Stomach (tissue), 19 donors: ENCODE measurements at regions of chr4 and their contacts with region 1.

Region 1: GRCh38 chr4:182806259-182807252 is 110.6 kb downstream of the DCTD start:
- DNase-seq: peak; percentile 81 to 93
- H3K4me3 ChIP-seq: peak overlapping the region; percentile 48 to 57 (median 48)
- H3K27ac ChIP-seq: peak overlapping the region in 1 of 5 donors; percentile 73
- H3K4me1 ChIP-seq: peaks cover 0 to 13% (median 11%) of the 10 kb centered on the region in 4 donors
- H3K27me3 ChIP-seq: peaks cover 0 to 11% (median 0%) of the 10 kb centered on the region in 3 donors
- CTCF ChIP-seq: peak in 6 of 7 experiments; percentile 10 to 84 (median 76)
- EP300 ChIP-seq: no peak
- POLR2A ChIP-seq: no peak

Region 2: DNA sequence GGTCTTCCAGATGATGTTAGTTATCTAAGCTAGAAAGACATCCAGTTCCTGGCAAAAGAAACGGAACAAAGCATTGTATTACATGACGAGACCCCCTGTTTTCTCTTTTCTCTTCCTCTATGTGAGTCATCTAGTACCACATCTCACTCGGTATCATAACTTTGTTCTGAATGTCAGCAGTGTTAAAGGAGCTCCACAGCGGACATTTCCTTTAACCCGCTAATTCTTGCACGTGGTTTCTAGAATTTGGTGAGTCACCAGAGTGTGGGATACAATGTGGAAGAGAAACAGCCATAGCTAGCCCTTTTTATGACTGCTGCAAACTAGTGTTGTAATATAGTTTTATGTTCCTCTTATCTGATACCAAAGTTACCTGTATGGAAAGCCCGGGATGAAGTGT is 319.7 kb before region 1 on chr4:
- intact Hi-C with region 1: loop called (anchors 10 kb)
- DNase-seq: no peak
- H3K4me3 ChIP-seq: no peak overlapping the region
- H3K27ac ChIP-seq: no peak overlapping the region
- H3K4me1 ChIP-seq: peaks cover 0 to 2% (median 0%) of the 10 kb centered on the region in 4 donors
- H3K27me3 ChIP-seq: no peaks in the 10 kb centered on the region
- CTCF ChIP-seq: no peak
- EP300 ChIP-seq: no peak
- POLR2A ChIP-seq: no peak

Region 3: DNA sequence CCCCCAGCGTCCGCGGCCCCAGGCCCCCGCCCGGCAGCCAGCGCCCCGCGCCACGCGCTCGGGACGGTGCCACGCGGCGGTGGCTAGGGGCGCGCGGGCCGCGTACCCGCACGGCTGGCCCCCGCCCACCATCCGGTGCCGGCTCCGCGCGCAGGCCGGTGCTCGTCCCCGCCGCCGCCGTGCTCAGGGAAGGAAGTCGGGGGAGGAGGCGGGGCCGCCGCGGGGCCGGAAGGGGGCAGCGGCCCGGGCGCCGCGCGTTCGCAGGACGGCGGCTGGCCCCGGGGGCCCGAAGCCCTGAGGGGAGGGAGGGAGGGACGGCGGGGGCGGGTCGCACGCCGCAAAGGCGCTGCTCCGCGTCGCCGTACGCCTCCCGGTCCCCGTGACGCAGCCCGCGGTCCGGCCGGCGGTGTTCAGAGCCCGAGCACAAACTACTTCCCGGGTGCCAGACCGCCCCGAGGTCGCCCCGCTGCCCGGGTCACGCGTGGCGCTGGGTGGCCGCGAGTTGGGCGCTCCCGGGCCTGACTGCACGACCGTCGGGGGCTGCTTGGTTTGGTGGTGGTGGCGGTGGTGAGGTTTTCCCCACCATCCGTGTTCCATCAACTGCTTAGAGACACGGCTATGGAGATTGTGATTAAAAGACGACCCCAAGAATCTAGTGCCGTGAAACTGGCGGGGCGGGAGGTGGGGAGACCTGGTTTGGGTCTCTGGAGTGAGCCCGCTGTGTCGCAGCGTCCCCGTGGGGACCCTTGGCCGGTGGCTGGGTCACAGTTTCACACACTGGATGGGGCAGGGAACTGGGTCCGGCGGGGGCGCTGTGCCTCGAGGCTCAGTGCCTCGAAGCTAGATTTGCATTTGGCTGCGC is 110.9 kb after region 1 on chr4 and contains the start of gene DCTD:
- intact Hi-C with region 1: no loop called
- DNase-seq: peak; percentile 82 to 94
- H3K4me3 ChIP-seq: peak within 1 kb of the TSS; percentile 56 to 81 (median 72)
- H3K27ac ChIP-seq: peak within 1 kb of the TSS; percentile 94 to 99 (median 95)
- H3K4me1 ChIP-seq: peaks cover 6 to 39% (median 25%) of the 10 kb centered on the region in 4 donors
- H3K27me3 ChIP-seq: no peaks in the 10 kb centered on the region
- CTCF ChIP-seq: peak in 3 of 7 experiments; percentile 6 to 34 (median 23)
- EP300 ChIP-seq: no peak
- POLR2A ChIP-seq: peak in 1 of 4 donors; percentile 35
- total RNA-seq, gene DCTD: 3.5 to 90.6 (median 81.7) TPM

Region 4: GRCh38 chr4:183080372-183081115 is 274.0 kb after region 1 on chr4:
- intact Hi-C with region 1: no loop called
- DNase-seq: no peak
- H3K4me3 ChIP-seq: no peak overlapping the region
- H3K27ac ChIP-seq: no peak overlapping the region
- H3K4me1 ChIP-seq: peaks cover 0 to 14% (median 6%) of the 10 kb centered on the region in 4 donors
- H3K27me3 ChIP-seq: no peaks in the 10 kb centered on the region
- CTCF ChIP-seq: no peak
- EP300 ChIP-seq: no peak
- POLR2A ChIP-seq: no peak

Region 5: GRCh38 chr4:183106839-183107238 is 300.3 kb after region 1 on chr4:
- intact Hi-C with region 1: no loop called
- DNase-seq: no peak
- H3K4me3 ChIP-seq: no peak overlapping the region
- H3K27ac ChIP-seq: no peak overlapping the region
- H3K4me1 ChIP-seq: peaks cover 11 to 38% (median 14%) of the 10 kb centered on the region in 4 donors
- H3K27me3 ChIP-seq: no peaks in the 10 kb centered on the region
- CTCF ChIP-seq: no peak
- EP300 ChIP-seq: no peak
- POLR2A ChIP-seq: no peak